Activated CD8-positive, alpha-beta T cell treated with anti-CD3 and anti-CD28 coated beads for 36 hours (primary cell): ENCODE measurements at regions of chr6 and their contacts with region 1.

Region 1: DNA sequence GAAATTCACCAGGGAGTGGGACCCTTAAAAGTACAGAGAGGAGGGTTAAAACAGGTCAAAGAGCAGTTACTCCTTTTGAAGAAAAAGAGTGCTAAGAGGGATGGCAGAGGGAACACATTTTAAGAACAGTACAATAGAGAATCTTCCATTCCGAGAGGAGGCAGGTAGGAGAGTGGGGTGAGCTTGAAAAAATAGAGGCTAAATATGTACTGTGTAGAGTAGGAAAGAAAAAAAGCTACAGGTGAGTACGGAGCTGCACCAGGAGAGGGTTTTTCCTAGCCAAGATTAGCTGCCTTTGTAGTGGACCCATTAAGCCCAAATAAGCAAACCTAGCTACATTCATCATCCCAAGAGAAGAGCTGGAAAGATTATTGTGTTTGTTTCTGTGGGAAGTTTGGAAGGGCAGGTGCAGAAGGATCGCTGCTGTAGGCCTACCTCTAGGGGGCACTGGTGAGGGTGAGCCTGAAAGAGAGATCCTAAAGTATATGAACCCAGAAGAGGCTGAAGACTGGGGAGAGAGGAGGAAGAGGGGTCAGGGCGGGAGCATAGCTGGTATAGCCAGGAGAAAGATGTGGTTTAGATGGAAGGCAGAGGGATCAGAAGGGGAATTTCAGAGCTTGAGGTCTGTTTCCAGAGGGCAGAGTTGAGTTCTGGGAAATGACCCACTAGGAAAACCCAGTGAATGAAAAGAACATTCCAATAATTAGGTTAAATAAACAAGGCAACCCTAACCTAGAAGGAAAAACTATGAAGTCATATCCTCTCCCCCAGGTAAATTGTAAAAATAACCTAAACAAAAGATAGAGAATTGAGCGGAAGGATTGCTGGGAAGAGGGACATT is 50.2 kb upstream of the HINT3 start:
- DNase-seq: peak; percentile 57
- ATAC-seq: no peak
- H3K4me3 Mint-ChIP-seq: no peak overlapping the region
- H3K27ac Mint-ChIP-seq: no peak overlapping the region
- H3K4me1 Mint-ChIP-seq: peaks cover 38% of the 10 kb centered on the region
- H3K27me3 Mint-ChIP-seq: no peaks in the 10 kb centered on the region
- CTCF ChIP-seq: peak; percentile 83

Region 2: GRCh38 chr6:125700581-125701353 is 205.6 kb before region 1 on chr6:
- CTCF ChIA-PET with region 1: no interaction called
- POLR2A ChIA-PET with region 1: no interaction called
- intact Hi-C with region 1: no loop called
- DNase-seq: no peak
- ATAC-seq: no peak
- H3K4me3 Mint-ChIP-seq: no peak overlapping the region
- H3K27ac Mint-ChIP-seq: no peak overlapping the region
- H3K4me1 Mint-ChIP-seq: no peaks in the 10 kb centered on the region
- H3K27me3 Mint-ChIP-seq: peaks cover 5% of the 10 kb centered on the region
- CTCF ChIP-seq: no peak

Region 3: GRCh38 chr6:125814481-125814880 is 91.9 kb before region 1 on chr6:
- CTCF ChIA-PET with region 1: no interaction called
- POLR2A ChIA-PET with region 1: no interaction called
- intact Hi-C with region 1: no loop called
- DNase-seq: no peak
- ATAC-seq: no peak
- H3K4me3 Mint-ChIP-seq: no peak overlapping the region
- H3K27ac Mint-ChIP-seq: peak overlapping the region; percentile 13
- H3K4me1 Mint-ChIP-seq: peaks cover 52% of the 10 kb centered on the region
- H3K27me3 Mint-ChIP-seq: no peaks in the 10 kb centered on the region
- CTCF ChIP-seq: no peak

Region 4: DNA sequence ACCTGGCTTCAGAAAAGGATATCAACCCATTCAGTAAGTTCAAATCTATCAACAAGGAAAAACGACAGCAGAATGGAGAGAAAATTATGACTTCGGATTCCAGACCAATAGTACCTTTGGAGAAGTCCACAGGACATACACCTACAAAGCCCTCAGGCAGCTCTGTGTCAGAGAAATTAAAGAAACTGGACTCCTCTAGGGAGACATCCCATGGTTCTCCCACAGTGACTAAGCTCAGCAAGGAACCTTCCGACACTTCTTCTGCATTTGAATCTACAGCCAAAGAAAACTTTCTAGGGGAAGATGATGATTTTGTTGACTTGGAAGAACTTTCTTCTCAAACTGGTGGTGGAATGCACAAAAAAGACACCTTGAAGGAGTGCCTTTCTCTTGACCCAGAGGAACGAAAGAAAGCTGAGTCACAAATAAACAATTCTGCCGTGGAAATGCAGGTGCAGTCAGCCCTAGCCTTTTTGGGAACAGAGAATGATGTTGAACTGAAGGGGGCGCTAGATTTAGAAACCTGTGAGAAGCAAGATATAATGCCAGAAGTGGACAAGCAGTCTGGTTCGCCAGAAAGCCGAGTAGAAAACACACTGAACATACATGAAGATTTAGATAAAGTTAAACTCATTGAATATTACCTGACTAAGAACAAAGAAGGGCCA is 17.3 kb before region 1 on chr6:
- CTCF ChIA-PET with region 1: interaction called, 29 read pairs
- POLR2A ChIA-PET with region 1: interaction called, 3 read pairs
- intact Hi-C with region 1: no loop called
- DNase-seq: peak; percentile 29
- ATAC-seq: no peak
- H3K4me3 Mint-ChIP-seq: no peak overlapping the region
- H3K27ac Mint-ChIP-seq: no peak overlapping the region
- H3K4me1 Mint-ChIP-seq: no peaks in the 10 kb centered on the region
- H3K27me3 Mint-ChIP-seq: no peaks in the 10 kb centered on the region
- CTCF ChIP-seq: peak; percentile 65

Region 5: DNA sequence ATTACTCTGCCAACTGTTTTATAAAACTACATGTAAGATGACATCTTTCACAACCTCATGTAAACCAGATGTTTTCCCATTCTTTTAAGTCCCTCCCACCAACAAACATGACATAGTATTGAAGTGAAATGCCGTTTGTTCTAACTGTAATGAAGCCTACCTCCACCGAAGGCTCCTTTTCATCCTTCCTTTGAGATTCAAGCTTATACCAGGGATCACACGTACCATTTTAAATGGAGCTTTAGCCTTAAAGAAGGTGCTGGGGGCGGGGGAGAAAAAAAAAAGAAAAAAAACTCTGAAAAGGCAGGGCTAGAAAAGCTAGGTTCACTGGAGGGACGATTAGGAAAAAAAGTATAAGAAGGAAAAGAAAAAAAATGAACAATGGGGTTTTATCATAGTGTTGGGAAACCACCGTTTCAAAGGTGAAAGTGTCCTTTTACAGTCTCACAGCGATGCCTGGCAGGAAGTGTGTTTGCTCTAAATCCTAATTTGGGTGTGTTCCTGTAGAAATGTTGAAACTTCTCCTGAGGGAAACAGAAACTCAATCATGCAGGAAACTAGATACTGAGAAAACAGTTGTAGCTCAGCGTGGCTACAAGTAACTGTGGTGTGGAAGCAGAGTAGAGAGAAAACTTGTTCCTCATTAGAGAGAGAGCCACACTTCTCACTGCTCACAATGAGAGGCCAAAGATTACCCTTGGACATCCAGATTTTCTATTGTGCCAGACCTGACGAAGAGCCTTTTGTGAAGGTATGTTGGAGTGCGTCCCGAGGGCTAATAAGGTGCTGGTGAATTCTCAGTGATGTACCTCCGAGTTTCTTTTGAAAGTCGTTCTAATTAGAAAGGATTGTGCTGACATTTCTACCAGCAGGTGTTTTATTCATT is 12.5 kb after region 1 on chr6:
- CTCF ChIA-PET with region 1: interaction called, 23 read pairs
- POLR2A ChIA-PET with region 1: interaction called, 3 read pairs
- intact Hi-C with region 1: no loop called
- DNase-seq: peak; percentile 67
- ATAC-seq: peak; percentile 97
- H3K4me3 Mint-ChIP-seq: peak overlapping the region; percentile 85
- H3K27ac Mint-ChIP-seq: peak overlapping the region; percentile 97
- H3K4me1 Mint-ChIP-seq: peaks cover 34% of the 10 kb centered on the region
- H3K27me3 Mint-ChIP-seq: no peaks in the 10 kb centered on the region
- CTCF ChIP-seq: no peak